Cardiac septum (tissue), 1 donor: ENCODE measurements at regions of chr19 and their contacts with region 1.

Region 1: GRCh38 chr19:4123615-4124568 is at the start of gene MAP2K2:
- DNase-seq: peak; percentile 98
- total RNA-seq, gene MAP2K2: 107 TPM

Region 2: GRCh38 chr19:3494051-3494450 is 629.8 kb before region 1 on chr19:
- intact Hi-C with region 1: no loop called
- DNase-seq: no peak

Region 3: DNA sequence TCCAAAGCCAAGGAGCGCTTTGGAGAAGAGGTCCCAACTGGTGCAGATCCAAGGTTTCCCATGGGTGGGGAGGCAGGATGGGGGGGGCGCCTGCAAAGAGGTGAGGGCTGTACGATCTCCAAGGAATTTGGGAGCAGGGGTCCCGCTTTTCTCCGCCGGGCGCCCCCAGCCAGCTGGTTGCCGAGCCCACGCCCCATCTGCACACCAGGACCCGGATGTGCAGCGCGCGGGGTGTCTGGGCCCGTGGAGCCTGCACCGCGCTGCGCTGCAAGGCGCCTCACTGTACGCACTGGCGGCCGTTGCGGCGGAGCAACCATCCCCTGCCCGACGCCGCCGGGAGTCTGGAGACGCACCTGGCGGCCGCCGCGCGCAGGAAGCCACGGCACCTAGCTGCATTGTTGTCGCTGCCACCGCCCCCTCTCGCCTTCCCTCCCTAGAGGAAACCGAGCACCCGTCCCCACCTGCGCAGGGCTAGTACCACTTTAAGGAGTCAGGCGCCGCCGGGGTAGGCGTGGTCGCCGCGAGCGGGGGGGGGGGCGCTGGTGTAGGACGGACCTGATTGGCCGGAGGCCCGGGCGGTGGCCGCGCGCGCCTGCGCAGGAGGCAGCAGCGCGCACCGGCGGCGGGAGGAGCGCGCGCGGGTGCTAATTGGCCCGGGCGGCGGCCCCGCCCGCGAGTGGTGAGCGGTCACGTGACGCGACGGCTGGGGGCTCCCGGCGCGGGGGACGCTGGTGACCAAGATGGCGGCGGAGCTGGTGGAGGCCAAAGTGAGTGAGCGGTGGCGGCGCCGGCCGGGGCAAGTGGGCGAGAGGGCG is 116.7 kb before region 1 on chr19 and contains the start of gene PIAS4:
- intact Hi-C with region 1: loop called (anchors 5 kb)
- DNase-seq: peak; percentile 97
- total RNA-seq, gene PIAS4: 18.4 TPM

Region 4: DNA sequence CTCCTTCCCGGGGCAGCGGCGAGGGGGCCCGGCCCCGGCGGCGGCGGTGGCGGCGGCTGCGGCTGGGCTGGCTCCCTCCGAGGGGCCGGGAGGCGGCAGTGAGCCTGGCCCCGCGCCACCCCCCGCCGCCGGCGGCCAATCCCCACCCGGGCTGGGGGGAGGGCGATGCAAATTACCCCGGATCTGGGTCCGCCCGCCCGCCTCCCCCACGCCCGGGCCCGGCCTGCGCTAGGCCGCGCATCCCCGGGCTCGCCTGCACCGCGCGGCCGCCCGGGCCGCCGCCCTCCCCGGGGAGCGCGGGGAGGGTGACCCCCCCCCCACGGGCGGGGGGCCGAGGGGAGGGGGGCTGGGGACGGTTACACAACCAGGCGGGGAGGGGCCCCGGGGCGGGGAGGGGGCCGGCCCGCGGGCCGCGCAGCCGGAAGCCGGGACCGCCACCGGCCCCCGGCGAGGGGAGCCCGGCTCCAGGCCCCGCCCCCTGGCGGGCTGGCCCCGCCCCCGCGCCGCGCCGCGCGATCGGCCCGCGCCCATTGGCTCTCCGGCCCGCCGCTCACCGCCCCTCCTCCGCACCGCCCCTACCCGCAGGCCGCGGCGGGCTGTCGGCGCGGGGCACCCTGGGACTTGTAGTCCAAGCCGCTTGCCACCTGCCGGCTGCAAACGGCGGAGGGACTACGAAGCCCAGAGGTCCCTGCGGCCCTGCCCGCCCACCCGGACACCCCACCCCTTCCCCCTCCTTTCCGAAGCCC is 58.3 kb before region 1 on chr19:
- intact Hi-C with region 1: loop called (anchors 2 kb)
- DNase-seq: peak; percentile 99

Region 5: DNA sequence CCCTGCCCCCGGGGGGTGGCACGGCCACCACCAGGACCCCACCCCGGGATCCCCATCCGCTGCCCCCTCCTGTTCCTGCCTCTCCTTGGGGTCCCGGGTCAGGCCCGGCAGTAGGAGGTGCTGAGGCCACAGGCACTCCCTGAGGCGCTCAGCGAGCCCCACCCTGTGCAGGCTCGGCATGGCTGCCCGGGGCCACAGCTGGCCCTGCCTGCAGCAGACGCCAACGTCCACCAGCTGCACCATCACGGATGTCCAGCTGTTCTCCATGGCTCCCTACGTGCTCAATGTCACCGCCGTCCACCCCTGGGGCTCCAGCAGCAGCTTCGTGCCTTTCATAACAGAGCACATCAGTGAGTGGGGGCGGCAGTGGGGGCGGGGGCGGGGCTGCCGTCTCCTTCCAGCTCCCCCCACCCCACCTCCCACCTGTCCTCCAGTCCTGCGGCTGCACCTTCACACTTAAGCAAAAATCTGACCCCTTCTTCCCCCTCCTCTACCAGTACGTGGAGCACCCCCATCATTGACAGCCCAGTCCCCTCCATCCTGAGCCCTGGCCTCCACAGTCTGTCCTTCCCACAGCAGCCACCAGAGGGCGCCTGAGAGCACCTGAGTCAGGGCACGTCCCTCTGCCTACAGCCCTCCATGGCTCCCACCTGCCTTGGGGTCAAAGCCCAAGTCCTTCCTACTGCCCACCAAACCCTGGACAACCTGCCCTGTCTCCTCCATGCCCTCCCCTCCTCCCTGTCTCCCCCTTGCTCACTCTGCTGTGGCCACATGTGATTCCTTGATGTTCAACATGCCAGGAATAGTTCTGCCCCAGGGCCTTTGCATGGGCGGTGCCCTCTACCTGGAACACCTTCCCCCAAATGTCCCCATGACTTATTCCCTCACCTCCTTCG is 109.3 kb after region 1 on chr19:
- intact Hi-C with region 1: no loop called
- DNase-seq: no peak